ENCODE measurements at regions of chr22 and their contacts with region 1.

Region 1: DNA sequence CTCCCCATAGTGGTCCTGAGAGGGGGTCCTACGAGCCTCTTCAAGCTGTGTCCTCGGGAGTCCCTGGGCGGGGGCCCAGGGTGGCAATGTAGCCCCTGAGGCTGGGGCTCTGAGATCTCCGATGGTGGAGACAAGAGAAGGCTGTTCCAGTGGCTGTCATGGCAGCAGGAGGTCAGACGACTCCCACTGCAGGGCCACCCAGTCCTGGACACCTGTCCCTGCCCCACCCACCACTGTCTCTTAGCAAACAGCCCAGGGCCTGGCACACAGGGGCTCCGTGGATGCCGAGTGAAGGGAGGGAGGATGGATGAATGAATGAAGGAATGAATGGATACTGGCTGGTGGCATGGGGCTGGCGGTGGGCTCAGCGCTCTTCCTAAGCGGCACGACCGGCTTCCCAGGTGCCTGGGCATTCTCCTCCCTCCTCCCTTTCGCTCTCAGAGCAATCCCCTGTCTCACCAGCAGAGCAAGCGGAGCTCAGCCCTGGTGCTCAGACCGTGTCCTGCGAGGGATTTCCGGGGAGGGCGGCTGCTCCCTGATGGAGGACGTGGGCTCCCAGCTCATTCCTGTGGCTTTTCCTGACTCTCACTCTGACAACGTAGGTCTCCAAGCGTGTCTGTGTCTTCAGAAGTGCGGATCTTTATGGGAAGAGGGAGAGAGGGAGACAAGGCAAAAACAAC is 1272.6 kb downstream of the BRD1 start:
- DNase-seq: no peak
- H3K4me3 ChIP-seq: no peak overlapping the region
- H3K27ac ChIP-seq: no peak overlapping the region
- H3K4me1 ChIP-seq: no peaks in the 10 kb centered on the region
- H3K27me3 ChIP-seq: no peaks in the 10 kb centered on the region
- CTCF ChIP-seq: no peak

Region 2: GRCh38 chr22:48450188-48450825 is 104.7 kb before region 1 on chr22:
- CTCF ChIA-PET with region 1: no interaction called
- dilution Hi-C with region 1: loop called (anchors 5 kb)
- in situ Hi-C with region 1: no loop called
- intact Hi-C with region 1: no loop called
- DNase-seq: no peak
- H3K4me3 ChIP-seq: no peak overlapping the region
- H3K27ac ChIP-seq: no peak overlapping the region
- H3K4me1 ChIP-seq: no peaks in the 10 kb centered on the region
- H3K27me3 ChIP-seq: no peaks in the 10 kb centered on the region
- CTCF ChIP-seq: no peak

Region 3: DNA sequence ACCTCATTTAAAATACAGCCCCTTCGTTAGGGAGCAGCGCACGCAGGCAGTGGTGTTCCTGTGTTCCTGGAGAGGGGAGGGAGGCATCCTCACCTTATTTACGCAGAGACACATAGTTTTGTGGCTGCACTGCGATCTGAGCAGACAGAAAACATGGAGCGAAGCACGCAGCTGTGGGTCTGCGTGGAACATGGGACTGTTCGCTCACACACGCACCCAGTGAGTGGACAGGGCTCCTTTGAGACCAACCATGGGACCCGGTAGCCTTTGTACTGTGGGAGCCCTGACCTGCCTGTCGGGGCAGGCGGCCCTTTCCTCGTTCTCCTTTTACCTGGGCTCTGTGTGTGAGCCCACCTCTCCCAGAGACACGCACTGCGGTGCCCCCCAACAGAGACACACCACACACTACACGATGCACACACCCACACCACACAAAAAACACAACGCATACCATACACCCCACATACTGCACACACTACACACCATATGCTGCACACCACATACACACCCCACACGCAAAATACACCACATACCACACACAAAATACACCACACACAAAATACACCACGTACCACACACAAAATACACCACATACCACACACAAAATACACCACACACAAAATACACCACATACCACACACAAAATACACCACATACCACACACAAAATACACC is 26.9 kb after region 1 on chr22:
- CTCF ChIA-PET with region 1: no interaction called
- dilution Hi-C with region 1: no loop called
- in situ Hi-C with region 1: no loop called
- intact Hi-C with region 1: no loop called
- DNase-seq: no peak
- H3K4me3 ChIP-seq: no peak overlapping the region
- H3K27ac ChIP-seq: no peak overlapping the region
- H3K4me1 ChIP-seq: no peaks in the 10 kb centered on the region
- H3K27me3 ChIP-seq: peaks cover 4% of the 10 kb centered on the region
- CTCF ChIP-seq: no peak

Region 4: DNA sequence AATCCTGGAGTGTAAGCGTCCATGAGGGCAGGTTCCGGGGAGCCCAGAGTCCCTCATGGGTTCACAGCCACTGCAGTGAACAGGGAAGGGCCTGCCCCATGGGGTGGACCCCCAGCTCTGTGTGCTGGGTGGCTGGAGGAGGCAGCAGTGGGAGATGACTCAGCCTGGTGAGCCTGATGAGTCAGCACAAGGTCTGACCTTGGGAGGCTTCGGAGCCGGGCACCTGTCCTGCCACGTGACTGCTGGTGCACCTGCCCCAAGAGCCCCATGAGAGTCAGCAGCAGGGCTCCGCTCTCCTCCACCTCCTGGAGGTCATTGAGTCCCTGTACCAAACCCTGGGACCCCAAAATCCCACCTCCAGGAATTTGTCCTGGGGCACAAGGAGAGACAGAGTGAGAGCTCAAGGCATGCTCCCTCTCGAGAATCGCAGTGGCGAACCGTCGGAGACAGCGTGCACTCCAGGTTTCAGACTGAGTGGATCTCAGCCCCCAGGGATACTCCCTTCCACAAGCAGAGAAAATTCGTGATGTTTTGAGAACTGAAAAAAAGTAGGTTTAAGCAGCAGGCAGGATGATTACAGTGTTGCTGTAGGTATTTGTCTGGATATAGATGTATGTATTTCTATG is 50.9 kb after region 1 on chr22:
- CTCF ChIA-PET with region 1: no interaction called
- dilution Hi-C with region 1: loop called (anchors 10 kb)
- in situ Hi-C with region 1: no loop called
- intact Hi-C with region 1: no loop called
- DNase-seq: no peak
- H3K4me3 ChIP-seq: no peak overlapping the region
- H3K27ac ChIP-seq: no peak overlapping the region
- H3K4me1 ChIP-seq: no peaks in the 10 kb centered on the region
- H3K27me3 ChIP-seq: peaks cover 2% of the 10 kb centered on the region
- CTCF ChIP-seq: no peak